AG04449 (cell line): ENCODE measurements at regions of chr3 and their contacts with region 1.

Region 1: GRCh38 chr3:114418724-114419543 is 125.1 kb downstream of the TIGIT start:
- DNase-seq: peak; percentile 78
- H3K4me3 ChIP-seq: no peak overlapping the region
- CTCF ChIP-seq: peak; percentile 61

Region 2: GRCh38 chr3:113966172-113966571 is 452.8 kb before region 1 on chr3:
- CTCF ChIA-PET with region 1: no interaction called
- POLR2A ChIA-PET with region 1: no interaction called
- DNase-seq: no peak
- H3K4me3 ChIP-seq: no peak overlapping the region
- CTCF ChIP-seq: no peak

Region 3: DNA sequence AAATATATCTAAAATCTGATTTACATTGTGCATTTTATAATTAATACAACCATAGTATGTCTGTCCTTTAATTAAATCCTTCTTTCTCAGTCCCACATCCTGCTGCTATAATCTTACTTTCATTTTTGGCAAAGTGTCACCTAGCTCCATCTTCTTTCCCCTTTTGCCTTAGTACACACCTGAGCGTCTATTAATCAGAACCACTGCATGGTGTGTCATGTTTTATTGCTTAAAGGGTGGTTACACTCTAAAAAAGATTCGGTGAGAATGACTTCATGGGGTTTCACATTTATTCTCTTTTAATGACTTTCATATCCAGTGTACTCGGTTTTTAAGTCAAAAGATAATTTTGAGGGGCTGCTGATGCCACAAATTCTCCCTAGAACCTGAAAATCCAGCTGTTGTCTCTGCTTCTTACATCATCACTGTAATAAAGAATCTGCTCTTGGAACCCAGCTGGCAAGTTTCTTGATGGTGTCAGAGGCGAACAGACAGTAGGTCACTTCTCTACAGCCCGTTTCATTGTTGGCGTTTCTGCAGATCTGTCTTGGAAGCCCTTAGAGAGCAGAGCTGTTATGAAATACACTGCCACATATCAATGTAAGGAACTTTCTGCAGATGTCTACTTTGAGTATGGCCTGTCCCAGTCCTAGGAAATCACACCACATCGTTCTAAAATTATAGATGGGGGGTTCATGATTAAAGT is 25.4 kb before region 1 on chr3:
- CTCF ChIA-PET with region 1: interaction called, 12 read pairs
- POLR2A ChIA-PET with region 1: no interaction called
- DNase-seq: no peak
- H3K4me3 ChIP-seq: no peak overlapping the region
- CTCF ChIP-seq: no peak

Region 4: GRCh38 chr3:114405202-114405990 is 13.5 kb before region 1 on chr3:
- CTCF ChIA-PET with region 1: interaction called, 74 read pairs
- POLR2A ChIA-PET with region 1: no interaction called
- DNase-seq: no peak
- H3K4me3 ChIP-seq: no peak overlapping the region
- CTCF ChIP-seq: no peak

Region 5: GRCh38 chr3:114442246-114442645 is 23.3 kb after region 1 on chr3:
- CTCF ChIA-PET with region 1: interaction called, 46 read pairs
- POLR2A ChIA-PET with region 1: no interaction called
- DNase-seq: peak; percentile 17
- H3K4me3 ChIP-seq: no peak overlapping the region
- CTCF ChIP-seq: no peak